MCF 10A (cell line): ENCODE measurements at regions of chr4 and their contacts with region 1.

Region 1: DNA sequence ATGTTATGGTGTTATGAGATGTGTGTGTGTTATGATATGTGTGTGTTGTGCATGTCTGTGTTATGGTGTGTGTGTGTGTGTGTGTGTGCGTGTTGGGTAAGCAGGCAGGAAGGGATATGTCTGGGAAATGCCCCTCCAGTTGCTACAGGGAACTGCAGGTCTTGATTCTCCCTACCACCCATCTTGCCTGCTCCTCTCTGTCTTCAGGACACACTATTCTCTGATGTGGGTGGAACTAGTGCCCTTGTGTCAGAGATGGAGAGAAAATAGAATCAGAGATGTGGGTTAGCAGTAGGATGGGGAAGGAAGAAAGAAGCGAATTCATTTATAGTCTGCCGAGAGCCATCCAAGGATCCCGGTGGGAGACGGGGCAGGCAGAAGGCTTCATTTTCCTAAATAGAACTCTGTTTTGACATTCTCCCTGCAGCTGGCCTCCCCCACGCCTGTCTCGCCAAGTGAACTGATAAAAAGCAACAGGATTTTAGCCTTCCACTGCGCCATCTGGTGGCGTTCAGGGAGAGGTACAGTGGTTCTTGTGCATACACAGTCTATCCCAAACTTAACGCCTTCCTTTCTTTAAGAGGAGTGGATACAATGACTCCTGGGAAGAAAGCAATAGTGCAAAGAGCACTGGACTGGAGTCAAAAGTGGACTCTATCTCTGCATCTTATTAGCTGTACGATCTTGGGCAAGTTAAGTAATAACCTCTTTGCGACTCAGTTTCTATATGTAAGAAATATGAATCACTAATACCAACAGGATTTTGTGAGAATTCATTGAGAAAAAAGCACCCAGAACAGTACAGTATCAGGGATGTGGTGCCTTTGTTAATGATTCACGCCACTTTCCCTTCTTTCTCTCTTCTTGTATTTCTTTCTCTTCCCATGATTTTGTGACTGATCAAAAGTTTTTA is 14.1 kb upstream of the MGST2 start:
- DNase-seq: peak; percentile 85
- H3K4me3 Mint-ChIP-seq: no peak overlapping the region
- H3K27ac Mint-ChIP-seq: no peak overlapping the region
- H3K4me1 Mint-ChIP-seq: peaks cover 25% of the 10 kb centered on the region
- H3K27me3 Mint-ChIP-seq: no peaks in the 10 kb centered on the region
- CTCF ChIP-seq: peak; percentile 77

Region 2: DNA sequence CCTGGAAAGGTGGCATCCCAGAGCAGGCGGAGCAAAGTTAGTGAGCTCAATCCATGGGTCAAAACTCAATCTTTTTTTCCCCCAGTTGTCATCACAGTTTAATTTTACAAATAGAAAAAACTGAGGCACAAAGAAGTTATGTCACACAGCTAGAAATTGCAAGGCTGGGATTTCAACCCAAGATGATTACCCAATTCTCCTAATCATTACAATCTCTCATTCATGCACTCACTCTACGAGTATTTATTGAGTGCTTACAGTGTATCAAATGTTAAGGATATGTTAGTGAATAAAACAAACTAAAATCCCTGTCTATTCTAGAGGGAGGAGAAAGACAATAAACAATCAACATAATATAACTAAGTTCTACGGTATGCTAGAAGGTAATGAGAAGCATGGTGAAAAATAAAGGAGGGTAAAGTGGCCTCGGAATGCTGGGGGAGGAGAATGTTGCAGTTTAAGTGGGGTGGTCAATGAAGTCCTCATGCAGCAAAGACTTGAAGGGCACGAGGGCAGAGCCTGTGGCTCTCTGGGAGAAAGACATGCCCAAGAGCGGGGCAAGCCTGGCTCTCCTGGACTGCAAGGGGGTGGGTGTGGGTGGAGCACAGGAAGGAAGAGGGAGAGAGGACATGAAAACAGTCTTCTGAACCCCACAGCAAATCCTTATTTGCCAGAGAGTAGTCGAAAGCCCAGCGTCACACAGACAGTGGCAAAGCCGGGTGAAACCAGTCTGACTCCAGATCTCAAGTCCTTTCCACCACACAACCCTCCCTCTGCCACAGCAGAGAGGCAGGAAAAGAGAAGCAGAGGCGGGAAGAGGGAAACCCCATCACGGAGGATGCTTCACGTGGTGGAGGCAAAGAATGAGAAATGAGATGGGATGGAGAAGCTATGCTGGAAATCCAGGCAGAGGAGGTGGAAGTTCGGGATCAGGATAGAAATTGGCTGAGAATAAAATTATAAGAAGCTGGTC is 149.3 kb before region 1 on chr4:
- CTCF ChIA-PET with region 1: interaction called, 13 read pairs
- POLR2A ChIA-PET with region 1: no interaction called
- intact Hi-C with region 1: loop called (anchors 1 kb)
- DNase-seq: no peak
- H3K4me3 Mint-ChIP-seq: no peak overlapping the region
- H3K27ac Mint-ChIP-seq: no peak overlapping the region
- H3K4me1 Mint-ChIP-seq: no peaks in the 10 kb centered on the region
- H3K27me3 Mint-ChIP-seq: no peaks in the 10 kb centered on the region
- CTCF ChIP-seq: no peak

Region 3: GRCh38 chr4:139609647-139610046 is 41.9 kb before region 1 on chr4:
- CTCF ChIA-PET with region 1: interaction called, 476 read pairs
- POLR2A ChIA-PET with region 1: interaction called, 9 read pairs
- intact Hi-C with region 1: no loop called
- DNase-seq: peak; percentile 81
- H3K4me3 Mint-ChIP-seq: no peak overlapping the region
- H3K27ac Mint-ChIP-seq: no peak overlapping the region
- H3K4me1 Mint-ChIP-seq: peaks cover 34% of the 10 kb centered on the region
- H3K27me3 Mint-ChIP-seq: no peaks in the 10 kb centered on the region
- CTCF ChIP-seq: no peak

Region 4: GRCh38 chr4:139665690-139666529 is 14.4 kb after region 1 on chr4 and contains the start of gene MGST2:
- CTCF ChIA-PET with region 1: interaction called, 72 read pairs
- POLR2A ChIA-PET with region 1: interaction called, 52 read pairs
- intact Hi-C with region 1: no loop called
- DNase-seq: peak; percentile 65
- H3K4me3 Mint-ChIP-seq: peak within 1 kb of the TSS; percentile 81
- H3K27ac Mint-ChIP-seq: peak within 1 kb of the TSS; percentile 93
- H3K4me1 Mint-ChIP-seq: peaks cover 23% of the 10 kb centered on the region
- H3K27me3 Mint-ChIP-seq: no peaks in the 10 kb centered on the region
- CTCF ChIP-seq: no peak
- total RNA-seq, gene MGST2: 27.5 and 41.5 TPM in 2 replicates